Naive thymus-derived CD4-positive, alpha-beta T cell (primary cell): ENCODE measurements at regions of chr7 and their contacts with region 1.

Region 1: DNA sequence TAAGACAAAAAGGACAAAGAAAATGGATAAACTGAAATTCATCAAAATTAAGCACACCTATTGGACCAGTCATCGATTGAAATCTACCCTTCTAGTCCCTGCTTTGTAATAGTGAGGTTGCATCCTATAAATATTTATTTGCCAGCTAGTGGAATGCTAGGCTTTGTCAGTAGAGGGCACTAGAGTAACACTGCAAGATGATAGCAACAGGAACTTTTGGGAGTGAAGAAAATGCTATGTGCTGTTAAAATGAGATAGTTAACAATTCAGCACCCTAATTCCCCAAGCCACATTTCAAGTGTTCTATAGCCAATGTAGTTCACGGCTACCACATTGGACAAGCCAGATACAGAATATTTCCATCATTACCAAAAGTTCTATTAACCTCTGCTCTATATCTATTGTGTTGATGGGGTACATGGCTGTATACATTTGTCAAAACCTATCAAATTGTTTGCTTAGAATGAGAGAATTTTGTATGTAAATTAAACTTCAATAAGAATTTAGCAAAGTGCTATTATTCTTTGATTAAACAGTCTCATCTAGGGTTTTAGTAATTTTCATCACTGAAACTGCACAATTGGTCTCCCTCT is 69.8 kb downstream of the LSMEM1 start:
- DNase-seq: peak in 7 of 9 donors; percentile 15 to 57 (median 45)
- ATAC-seq: peak; percentile 76
- H3K4me3 ChIP-seq: no peak overlapping the region
- H3K4me3 Mint-ChIP-seq: no peak overlapping the region
- H3K27ac ChIP-seq: no peak overlapping the region
- H3K27ac Mint-ChIP-seq: no peak overlapping the region
- H3K4me1 ChIP-seq: no peaks in the 10 kb centered on the region
- H3K4me1 Mint-ChIP-seq: no peaks in the 10 kb centered on the region
- H3K27me3 ChIP-seq: peaks cover 0 to 4% of the 10 kb centered on the region in 2 donors
- H3K27me3 Mint-ChIP-seq: peaks cover 5 to 22% (median 14%) of the 10 kb centered on the region in 5 donors

Region 2: DNA sequence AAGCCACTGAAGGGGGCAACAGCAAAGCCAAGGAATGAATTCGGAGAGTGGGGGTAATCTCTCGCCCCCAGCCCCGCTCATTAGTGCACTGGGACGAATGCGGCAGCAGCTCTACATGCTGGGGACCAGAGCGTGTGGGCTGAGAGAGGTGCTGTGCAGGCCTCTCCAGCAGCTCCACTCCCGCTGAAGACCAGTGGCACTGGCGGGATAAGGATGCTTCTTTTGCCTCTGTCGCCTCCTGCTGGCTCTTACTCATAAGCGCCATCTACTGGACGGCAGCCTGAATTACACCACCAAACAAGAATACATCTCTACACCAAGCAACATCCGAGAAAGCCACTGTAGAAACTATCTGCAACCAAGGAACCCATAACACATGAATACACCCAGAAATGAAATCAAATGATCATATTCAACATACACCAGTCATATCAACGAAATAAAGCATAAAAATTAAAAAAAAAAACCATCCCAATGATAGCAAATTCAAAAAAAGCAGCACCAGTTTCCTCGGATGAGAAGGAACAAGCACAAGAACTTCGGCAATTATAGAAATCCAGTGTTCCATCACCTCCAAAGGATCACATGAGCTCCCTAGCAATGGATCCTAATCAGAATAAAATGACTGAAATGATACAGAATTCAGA is 318.7 kb after region 1 on chr7:
- CTCF ChIA-PET with region 1: no interaction called
- POLR2A ChIA-PET with region 1: no interaction called
- intact Hi-C with region 1: loop called in 1 of 2 experiments (anchors 1 kb)
- DNase-seq: peak in 8 of 9 donors; percentile 2 to 53 (median 37)
- ATAC-seq: peak; percentile 71
- H3K4me3 ChIP-seq: no peak overlapping the region
- H3K4me3 Mint-ChIP-seq: no peak overlapping the region
- H3K27ac ChIP-seq: no peak overlapping the region
- H3K27ac Mint-ChIP-seq: no peak overlapping the region
- H3K4me1 ChIP-seq: no peaks in the 10 kb centered on the region
- H3K4me1 Mint-ChIP-seq: peaks cover 11 to 56% (median 45%) of the 10 kb centered on the region in 7 donors
- H3K27me3 ChIP-seq: no peaks in the 10 kb centered on the region
- H3K27me3 Mint-ChIP-seq: no peaks in the 10 kb centered on the region

Region 3: GRCh38 chr7:112898432-112899290 is 348.1 kb after region 1 on chr7:
- CTCF ChIA-PET with region 1: no interaction called
- POLR2A ChIA-PET with region 1: no interaction called
- intact Hi-C with region 1: loop called (anchors 1 kb)
- DNase-seq: peak in 7 of 9 donors; percentile 4 to 30 (median 23)
- ATAC-seq: peak; percentile 81
- H3K4me3 ChIP-seq: no peak overlapping the region
- H3K4me3 Mint-ChIP-seq: no peak overlapping the region
- H3K27ac ChIP-seq: no peak overlapping the region
- H3K27ac Mint-ChIP-seq: peak overlapping the region in 1 of 9 donors; percentile 51
- H3K4me1 ChIP-seq: no peaks in the 10 kb centered on the region
- H3K4me1 Mint-ChIP-seq: peaks cover 0 to 26% (median 14%) of the 10 kb centered on the region in 7 donors
- H3K27me3 ChIP-seq: no peaks in the 10 kb centered on the region
- H3K27me3 Mint-ChIP-seq: no peaks in the 10 kb centered on the region

Region 4: DNA sequence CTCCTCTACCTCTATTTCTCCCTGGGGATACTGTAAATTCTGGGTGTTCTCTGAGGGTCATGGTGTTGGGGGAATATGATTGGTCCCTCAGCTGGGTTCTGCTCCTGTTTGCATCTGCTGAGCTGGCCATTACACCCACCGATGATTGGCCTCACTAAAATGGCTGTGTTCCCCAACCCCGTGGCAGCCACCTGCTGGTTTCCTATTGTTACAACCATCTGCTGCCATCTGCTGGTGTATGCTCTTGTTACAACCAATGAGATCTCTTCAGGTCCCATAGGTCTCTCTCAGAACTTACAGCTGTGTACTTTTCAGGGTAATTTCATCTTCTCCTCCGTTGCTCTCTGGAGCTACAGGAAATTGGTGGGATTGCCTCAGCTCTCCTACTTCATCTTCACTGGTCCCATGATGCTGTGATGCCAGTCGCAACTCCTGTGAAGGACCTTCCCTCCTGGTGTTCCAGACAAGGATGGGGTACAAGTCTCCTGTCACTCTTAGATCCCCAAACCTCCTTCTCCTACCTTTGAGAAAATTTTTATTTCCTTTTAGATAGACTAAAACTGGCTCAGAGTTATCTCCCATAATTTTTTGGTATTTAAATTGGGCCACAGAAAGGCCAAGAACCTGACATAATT is 871.2 kb after region 1 on chr7:
- CTCF ChIA-PET with region 1: interaction called, 6 read pairs
- POLR2A ChIA-PET with region 1: no interaction called
- intact Hi-C with region 1: loop called (anchors 1 kb)
- DNase-seq: peak; percentile 26 to 73 (median 64)
- ATAC-seq: peak; percentile 95
- H3K4me3 ChIP-seq: no peak overlapping the region
- H3K4me3 Mint-ChIP-seq: peak overlapping the region in 7 of 10 donors; percentile 33 to 65 (median 52)
- H3K27ac ChIP-seq: no peak overlapping the region
- H3K27ac Mint-ChIP-seq: peak overlapping the region in 1 of 9 donors; percentile 72
- H3K4me1 ChIP-seq: no peaks in the 10 kb centered on the region
- H3K4me1 Mint-ChIP-seq: peaks cover 3 to 5% (median 4%) of the 10 kb centered on the region in 7 donors
- H3K27me3 ChIP-seq: no peaks in the 10 kb centered on the region
- H3K27me3 Mint-ChIP-seq: peaks cover 0 to 7% (median 3%) of the 10 kb centered on the region in 5 donors

Region 5: GRCh38 chr7:113698556-113699220 is 1148.1 kb after region 1 on chr7:
- CTCF ChIA-PET with region 1: no interaction called
- POLR2A ChIA-PET with region 1: no interaction called
- intact Hi-C with region 1: loop called in 1 of 2 experiments (anchors 5 kb)
- DNase-seq: no peak
- ATAC-seq: no peak
- H3K4me3 ChIP-seq: no peak overlapping the region
- H3K4me3 Mint-ChIP-seq: no peak overlapping the region
- H3K27ac ChIP-seq: no peak overlapping the region
- H3K27ac Mint-ChIP-seq: no peak overlapping the region
- H3K4me1 ChIP-seq: no peaks in the 10 kb centered on the region
- H3K4me1 Mint-ChIP-seq: no peaks in the 10 kb centered on the region
- H3K27me3 ChIP-seq: no peaks in the 10 kb centered on the region
- H3K27me3 Mint-ChIP-seq: peaks cover 0 to 9% (median 0%) of the 10 kb centered on the region in 5 donors